ENCODE measurements at regions of chr2 and their contacts with region 1.

Region 1: DNA sequence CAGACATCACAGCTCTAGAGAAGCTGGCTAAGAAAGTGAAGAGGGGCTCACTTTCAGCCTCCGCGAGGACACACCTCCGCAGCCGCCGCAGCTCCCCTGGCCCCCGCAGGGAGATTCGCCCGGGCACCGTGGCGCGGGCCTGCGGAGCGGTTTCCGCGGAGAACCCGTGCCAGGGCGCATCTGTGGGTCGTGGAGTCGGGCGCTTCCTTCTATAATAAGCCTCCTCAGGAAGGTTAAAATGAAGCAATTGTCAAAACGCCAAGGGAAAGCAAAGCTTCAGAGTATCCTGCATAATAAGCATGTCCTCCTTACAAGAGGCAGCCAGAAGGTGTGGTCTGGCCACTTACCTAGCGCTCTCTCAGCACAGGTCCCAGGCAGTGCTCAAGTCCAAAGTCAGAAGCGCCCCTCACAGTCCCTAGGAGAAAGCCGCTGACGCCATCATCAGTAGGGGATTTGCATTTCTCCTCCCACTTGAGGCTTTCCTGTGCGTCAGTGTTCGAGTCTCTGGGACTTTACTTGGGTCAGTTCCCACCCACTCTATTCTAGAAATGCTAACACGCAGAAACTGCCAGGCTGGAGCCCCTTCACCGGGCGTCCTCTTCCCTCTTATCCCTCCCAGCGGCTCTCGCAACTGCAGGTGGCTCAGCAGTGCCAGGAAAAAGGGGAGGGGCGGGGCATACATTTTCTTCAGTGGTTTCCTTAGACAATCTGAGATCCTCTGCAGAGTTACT is at the start of gene STAT4:
- DNase-seq: peak; percentile 91
- ATAC-seq: peak; percentile 87
- H3K4me3 Mint-ChIP-seq: peak within 1 kb of the TSS; percentile 93
- H3K27ac Mint-ChIP-seq: peak within 1 kb of the TSS; percentile 96
- H3K4me1 Mint-ChIP-seq: peaks cover 70% of the 10 kb centered on the region
- H3K27me3 Mint-ChIP-seq: no peaks in the 10 kb centered on the region
- total RNA-seq, gene STAT4: 48.8 to 59.5 TPM

Region 2: DNA sequence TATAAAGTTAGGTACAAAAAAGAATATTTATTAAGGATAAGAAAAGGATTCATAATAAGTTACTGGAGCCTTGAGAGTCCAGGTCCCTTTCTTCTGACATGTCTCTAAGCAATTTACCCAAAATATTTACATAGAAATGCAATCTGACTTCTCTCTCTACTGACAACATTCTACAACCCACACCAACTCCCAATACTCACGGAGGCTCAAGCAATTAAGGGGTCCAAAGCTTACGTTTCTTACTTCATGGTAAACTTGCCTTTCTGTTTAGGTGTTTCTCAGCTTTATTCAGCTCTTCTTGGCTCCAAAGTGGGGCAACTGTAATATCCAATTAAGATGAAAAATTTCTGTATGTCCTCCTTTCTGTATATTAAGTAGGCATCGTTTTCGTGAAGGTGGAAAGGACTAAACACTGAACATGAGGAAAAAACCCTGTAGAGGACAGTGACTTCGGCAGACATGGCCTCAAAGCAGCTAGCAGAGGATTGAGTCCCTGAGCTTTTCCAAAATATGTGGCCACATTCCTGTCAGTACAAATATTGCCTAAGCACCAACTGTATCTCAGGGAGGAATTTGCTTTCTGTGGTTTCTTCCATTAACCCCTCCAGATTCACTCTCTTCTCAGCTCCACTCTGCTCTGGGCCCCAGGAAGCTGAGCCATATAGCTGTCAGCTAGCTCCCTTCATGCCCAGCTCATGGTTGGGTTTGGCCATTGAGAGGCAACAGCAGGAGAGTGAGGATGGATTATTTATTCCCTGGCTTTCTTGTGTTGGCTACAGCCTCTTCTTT is 338.1 kb before region 1 on chr2:
- CTCF ChIA-PET with region 1: no interaction called
- POLR2A ChIA-PET with region 1: no interaction called
- intact Hi-C with region 1: no loop called
- DNase-seq: no peak
- ATAC-seq: no peak
- H3K4me3 Mint-ChIP-seq: no peak overlapping the region
- H3K27ac Mint-ChIP-seq: no peak overlapping the region
- H3K4me1 Mint-ChIP-seq: peaks cover 19% of the 10 kb centered on the region
- H3K27me3 Mint-ChIP-seq: no peaks in the 10 kb centered on the region

Region 3: DNA sequence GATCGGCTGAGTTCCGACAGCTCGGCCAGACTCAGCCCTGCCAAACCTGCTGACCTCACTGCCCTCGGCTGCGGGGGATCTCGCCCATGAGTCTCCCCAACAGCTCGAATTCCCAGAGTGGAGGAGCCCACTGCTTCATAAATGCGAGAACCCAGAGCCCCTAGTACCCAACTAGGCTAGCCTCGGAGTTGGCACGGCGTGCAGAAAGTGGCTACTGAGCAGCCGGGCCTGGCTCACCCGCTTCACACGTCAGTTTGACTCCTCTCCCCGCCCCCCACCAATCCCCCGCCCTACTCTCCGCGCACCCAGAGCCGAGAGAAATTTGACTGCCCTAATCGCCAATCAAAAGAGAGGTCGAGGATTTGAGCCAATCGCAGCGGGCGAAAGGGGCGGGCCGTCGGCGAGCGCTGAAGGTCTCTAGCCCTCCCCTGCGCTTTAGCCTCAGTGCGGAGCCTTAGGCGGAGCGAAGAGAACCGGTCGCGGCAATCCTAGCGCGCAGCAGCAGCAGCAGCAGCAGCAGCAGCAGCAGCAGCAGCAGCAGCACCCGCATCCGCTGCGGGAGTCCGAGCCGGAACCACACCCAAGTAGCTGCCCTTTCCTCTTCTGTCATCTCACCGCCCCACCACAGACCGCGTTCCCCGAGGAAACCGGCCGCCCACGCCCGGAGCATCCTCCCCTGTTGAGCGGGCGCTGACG is 270.2 kb before region 1 on chr2 and contains the start of gene GLS:
- CTCF ChIA-PET with region 1: no interaction called
- POLR2A ChIA-PET with region 1: no interaction called
- intact Hi-C with region 1: loop called in 1 of 2 experiments (anchors 1 kb)
- DNase-seq: peak; percentile 98
- ATAC-seq: peak; percentile 81
- H3K4me3 Mint-ChIP-seq: peak within 1 kb of the TSS; percentile 79
- H3K27ac Mint-ChIP-seq: peak within 1 kb of the TSS; percentile 98
- H3K4me1 Mint-ChIP-seq: peaks cover 41% of the 10 kb centered on the region
- H3K27me3 Mint-ChIP-seq: no peaks in the 10 kb centered on the region
- total RNA-seq, gene GLS: 136 to 242 TPM

Region 4: DNA sequence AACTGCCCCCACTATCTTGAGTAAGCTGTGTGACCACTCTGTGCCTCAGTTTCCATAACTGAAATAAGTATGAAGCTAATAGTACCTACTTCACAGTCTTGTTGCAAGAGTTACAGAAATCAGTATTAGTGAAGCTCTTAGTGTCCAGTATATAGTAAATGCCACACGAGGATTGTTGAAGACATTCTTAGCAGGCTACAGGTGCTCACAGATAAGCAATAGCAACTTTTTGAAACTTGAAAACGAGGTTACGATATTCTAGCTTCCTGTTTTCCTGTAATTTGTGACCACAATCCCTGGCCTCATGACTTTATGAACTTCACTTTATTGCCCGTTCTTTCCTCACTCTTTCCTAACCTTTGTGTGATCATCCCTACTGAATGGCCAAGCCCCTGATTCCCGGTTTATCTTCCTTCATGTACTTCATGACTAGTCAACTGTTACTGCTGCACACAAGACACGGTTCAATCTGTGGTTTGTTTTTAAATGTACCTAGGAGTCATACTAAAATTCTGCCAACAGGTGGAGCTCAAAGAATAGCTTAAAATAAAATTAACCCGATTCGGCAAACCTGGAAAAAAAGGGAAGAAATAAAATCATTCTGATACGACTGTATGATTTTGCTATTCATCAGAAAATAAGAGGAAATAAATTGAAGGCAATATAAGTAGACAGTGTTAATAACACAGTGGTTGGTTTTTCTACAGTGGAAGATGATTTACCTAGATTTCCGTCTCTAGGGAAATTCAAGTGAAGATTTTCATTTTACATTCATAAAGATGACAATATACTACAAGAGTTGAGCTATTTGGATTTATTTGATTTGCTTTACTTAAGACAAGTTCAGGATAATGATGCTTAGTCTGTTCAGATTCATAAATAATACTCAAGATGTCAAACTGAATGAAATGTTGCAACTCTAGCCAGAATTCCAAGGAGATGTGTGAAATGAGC is 98.7 kb before region 1 on chr2:
- CTCF ChIA-PET with region 1: interaction called, 348 read pairs
- POLR2A ChIA-PET with region 1: no interaction called
- intact Hi-C with region 1: loop called (anchors 1 kb)
- DNase-seq: peak; percentile 26
- ATAC-seq: peak; percentile 71
- H3K4me3 Mint-ChIP-seq: no peak overlapping the region
- H3K27ac Mint-ChIP-seq: no peak overlapping the region
- H3K4me1 Mint-ChIP-seq: peaks cover 15% of the 10 kb centered on the region
- H3K27me3 Mint-ChIP-seq: no peaks in the 10 kb centered on the region

Region 5: GRCh38 chr2:191081411-191082155 is 69.2 kb before region 1 on chr2:
- CTCF ChIA-PET with region 1: no interaction called
- POLR2A ChIA-PET with region 1: no interaction called
- intact Hi-C with region 1: no loop called
- DNase-seq: no peak
- ATAC-seq: no peak
- H3K4me3 Mint-ChIP-seq: no peak overlapping the region
- H3K27ac Mint-ChIP-seq: no peak overlapping the region
- H3K4me1 Mint-ChIP-seq: peaks cover 16% of the 10 kb centered on the region
- H3K27me3 Mint-ChIP-seq: no peaks in the 10 kb centered on the region

Region 6: DNA sequence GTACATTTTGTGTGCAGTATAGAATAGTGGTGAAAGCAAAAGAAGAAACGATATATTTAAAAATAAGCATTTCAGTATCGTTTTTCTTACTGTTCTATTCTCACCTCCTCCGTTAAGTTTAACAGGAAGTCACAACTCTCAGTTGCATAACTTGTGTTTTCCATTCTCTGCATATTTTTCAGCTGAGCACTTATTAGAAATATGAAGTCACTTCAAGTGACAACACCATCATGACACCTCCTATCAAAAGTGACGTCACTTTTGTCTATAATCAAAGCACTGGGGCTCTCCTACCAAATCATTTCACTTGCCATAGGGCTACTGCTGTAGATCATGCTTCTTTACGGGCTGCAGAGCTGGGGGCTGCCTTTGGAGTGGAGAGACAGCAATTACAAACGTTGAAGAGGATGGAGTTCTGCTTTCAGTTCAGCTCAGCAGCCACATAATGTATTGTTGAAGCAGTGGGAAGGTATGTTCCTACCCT is 36.3 kb before region 1 on chr2:
- CTCF ChIA-PET with region 1: interaction called, 11 read pairs
- POLR2A ChIA-PET with region 1: interaction called, 9 read pairs
- intact Hi-C with region 1: loop called (anchors 1 kb)
- DNase-seq: peak; percentile 49
- ATAC-seq: peak; percentile 22
- H3K4me3 Mint-ChIP-seq: peak overlapping the region; percentile 30
- H3K27ac Mint-ChIP-seq: peak overlapping the region; percentile 82
- H3K4me1 Mint-ChIP-seq: peaks cover 62% of the 10 kb centered on the region
- H3K27me3 Mint-ChIP-seq: no peaks in the 10 kb centered on the region

Region 7: DNA sequence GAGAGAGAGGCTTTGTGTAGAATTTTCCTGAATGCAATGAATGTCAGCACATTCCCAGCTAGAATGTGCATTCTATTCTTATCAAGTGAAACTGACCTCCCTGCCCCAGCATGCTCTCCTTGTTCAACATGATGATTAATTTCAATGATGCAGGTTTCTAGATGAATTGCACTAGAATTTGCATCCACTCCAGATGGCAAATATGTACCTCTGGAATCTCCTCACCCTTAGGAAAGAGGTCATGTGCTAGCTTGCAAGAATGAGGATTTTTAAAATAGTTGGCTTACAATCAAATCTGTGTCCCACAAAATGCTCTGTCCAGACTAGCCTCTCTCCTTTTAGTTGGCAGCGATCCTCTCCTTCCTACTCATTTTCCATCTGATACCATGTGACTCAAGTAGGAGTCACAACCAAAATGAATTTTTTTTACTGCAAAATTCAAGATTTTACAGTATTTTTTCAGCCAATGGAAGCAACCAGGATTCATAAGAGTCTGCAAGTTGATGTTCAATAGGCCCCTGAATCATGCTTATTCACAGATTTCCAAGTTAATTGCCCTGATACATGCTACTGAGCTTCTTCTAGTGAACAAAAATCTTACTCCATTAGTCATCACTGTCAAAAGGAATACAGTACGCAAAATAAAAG is 21.1 kb after region 1 on chr2:
- CTCF ChIA-PET with region 1: interaction called, 25 read pairs
- POLR2A ChIA-PET with region 1: no interaction called
- intact Hi-C with region 1: no loop called
- DNase-seq: peak; percentile 48
- ATAC-seq: peak; percentile 56
- H3K4me3 Mint-ChIP-seq: no peak overlapping the region
- H3K27ac Mint-ChIP-seq: peak overlapping the region; percentile 60
- H3K4me1 Mint-ChIP-seq: peaks cover 78% of the 10 kb centered on the region
- H3K27me3 Mint-ChIP-seq: no peaks in the 10 kb centered on the region

Region 8: DNA sequence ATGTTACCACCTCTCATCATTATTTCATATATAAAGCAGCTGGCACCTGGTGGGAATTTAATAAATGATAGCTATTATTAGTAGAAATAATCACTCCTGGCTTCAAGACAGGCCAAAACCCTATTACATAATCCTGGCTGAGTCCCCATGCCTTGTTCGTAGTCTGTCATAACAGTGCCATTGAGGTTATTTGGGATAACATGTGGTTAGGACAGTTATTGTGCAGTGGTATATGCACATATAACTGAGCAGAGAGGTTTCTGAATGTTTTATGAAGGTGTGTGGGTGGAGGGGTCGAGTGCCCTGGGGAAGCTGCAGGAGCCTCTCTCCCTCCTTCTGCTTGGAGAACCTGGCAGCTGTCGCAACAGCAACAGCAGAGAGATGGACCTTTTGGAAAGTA is 364.8 kb after region 1 on chr2:
- CTCF ChIA-PET with region 1: interaction called, 11 read pairs
- POLR2A ChIA-PET with region 1: no interaction called
- intact Hi-C with region 1: no loop called
- DNase-seq: no peak
- ATAC-seq: no peak
- H3K4me3 Mint-ChIP-seq: no peak overlapping the region
- H3K27ac Mint-ChIP-seq: no peak overlapping the region
- H3K4me1 Mint-ChIP-seq: no peaks in the 10 kb centered on the region
- H3K27me3 Mint-ChIP-seq: peaks cover 6% of the 10 kb centered on the region

Region 9: DNA sequence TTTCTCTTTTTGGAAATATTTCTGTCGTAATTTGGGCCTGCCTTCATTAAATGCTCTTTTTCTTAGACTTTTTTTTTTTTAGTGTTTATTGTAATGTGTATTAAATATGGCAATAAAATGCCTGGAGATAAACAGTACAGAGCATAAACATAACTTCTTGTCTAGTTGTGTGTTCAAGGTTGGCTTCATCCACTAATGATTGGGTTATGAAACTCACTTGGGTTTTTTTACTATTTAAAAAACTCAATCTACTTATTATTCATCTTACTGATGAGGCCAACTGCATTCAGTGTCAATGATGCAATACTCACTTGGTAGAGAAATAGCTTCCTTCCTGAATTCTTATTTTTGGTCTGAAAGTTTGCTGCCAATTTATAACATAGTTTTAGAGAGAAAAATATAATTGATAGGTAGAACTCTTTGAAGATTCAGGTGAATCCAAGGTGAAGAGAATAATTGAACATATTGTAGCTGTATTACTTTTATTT is 383.0 kb after region 1 on chr2:
- CTCF ChIA-PET with region 1: no interaction called
- POLR2A ChIA-PET with region 1: no interaction called
- intact Hi-C with region 1: no loop called
- DNase-seq: no peak
- ATAC-seq: no peak
- H3K4me3 Mint-ChIP-seq: no peak overlapping the region
- H3K27ac Mint-ChIP-seq: no peak overlapping the region
- H3K4me1 Mint-ChIP-seq: peaks cover 6% of the 10 kb centered on the region
- H3K27me3 Mint-ChIP-seq: no peaks in the 10 kb centered on the region

Measured in activated CD4-positive, alpha-beta T cell treated with anti-CD3 and anti-CD28 coated beads for 36 hours (primary cell).